ENCODE measurements at regions of chr14 and their contacts with region 1.

Region 1: DNA sequence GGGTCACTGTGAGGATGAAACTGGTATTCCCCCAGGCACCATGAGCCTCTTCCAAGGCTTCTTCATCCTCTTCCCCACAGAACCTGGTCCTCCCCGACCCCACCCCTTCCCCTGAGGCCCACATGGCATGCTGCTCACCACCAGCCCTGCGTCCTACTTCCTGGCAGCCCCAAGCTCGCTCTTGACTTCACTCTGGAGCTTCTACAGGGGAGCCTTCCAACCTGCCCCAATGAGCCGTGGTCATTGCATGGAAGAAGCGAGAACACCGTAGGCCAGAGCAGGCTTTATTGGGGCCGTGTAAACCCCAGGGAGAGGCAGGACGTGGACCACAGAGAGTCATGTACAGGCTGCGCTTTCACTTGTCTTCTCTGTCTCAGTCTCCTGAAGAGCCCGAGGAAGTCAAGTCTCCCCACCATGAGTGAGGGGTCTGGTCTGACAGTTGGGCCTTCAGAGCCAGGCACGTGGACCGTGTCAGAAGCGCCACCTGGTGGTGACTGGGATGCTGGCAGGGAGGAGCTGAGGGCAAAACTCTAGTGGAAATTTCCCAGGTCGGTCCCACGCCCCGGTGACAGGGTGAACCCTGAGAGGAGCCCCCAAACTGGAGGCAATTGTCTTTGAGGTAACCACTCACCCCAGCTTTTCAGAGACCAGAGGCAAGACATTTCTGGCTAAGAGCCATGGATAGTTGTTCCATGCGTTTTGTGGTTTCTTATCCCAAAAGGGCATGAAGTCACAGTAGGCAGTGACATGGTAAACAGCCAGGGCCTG is 17.5 kb downstream of the RPS6KL1 start:
- DNase-seq: no peak
- H3K4me3 ChIP-seq: no peak overlapping the region
- H3K27me3 ChIP-seq: no peaks in the 10 kb centered on the region
- CTCF ChIP-seq: peak; percentile 93

Region 2: DNA sequence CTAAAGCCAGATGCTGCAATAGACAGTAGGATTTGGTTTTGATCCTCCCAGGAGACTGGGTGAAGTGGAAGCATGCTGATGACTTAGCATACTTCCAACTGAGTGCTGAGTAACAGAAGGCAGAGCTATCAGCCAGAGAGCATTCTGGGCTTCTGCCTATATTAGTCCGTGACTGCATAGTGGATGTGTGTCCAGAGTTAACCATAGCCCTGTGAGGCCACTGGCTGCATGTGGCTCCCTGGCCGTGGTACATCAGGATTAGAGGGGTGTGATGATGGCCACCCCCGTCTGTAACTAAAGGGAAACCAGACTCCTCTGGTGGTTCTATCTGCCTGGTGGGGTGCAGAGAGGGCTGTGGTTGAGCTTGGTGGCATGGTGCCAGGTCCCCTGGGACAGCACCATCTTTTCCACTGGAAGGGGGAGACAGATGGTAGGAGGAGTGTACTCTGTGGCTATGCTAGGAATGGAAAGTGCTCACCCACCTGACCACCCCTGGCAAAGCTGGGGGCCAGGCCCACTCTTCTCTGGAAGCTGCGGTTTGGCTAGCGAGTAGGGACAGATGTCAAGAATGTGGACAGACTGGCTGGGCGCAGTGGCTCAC is 630.2 kb before region 1 on chr14:
- CTCF ChIA-PET with region 1: no interaction called
- POLR2A ChIA-PET with region 1: no interaction called
- DNase-seq: no peak
- H3K4me3 ChIP-seq: no peak overlapping the region
- H3K27me3 ChIP-seq: no peaks in the 10 kb centered on the region
- CTCF ChIP-seq: no peak

Region 3: GRCh38 chr14:74524076-74524811 is 381.3 kb before region 1 on chr14:
- CTCF ChIA-PET with region 1: no interaction called
- POLR2A ChIA-PET with region 1: no interaction called
- DNase-seq: no peak
- H3K4me3 ChIP-seq: no peak overlapping the region
- H3K27me3 ChIP-seq: no peaks in the 10 kb centered on the region
- CTCF ChIP-seq: no peak

Region 4: DNA sequence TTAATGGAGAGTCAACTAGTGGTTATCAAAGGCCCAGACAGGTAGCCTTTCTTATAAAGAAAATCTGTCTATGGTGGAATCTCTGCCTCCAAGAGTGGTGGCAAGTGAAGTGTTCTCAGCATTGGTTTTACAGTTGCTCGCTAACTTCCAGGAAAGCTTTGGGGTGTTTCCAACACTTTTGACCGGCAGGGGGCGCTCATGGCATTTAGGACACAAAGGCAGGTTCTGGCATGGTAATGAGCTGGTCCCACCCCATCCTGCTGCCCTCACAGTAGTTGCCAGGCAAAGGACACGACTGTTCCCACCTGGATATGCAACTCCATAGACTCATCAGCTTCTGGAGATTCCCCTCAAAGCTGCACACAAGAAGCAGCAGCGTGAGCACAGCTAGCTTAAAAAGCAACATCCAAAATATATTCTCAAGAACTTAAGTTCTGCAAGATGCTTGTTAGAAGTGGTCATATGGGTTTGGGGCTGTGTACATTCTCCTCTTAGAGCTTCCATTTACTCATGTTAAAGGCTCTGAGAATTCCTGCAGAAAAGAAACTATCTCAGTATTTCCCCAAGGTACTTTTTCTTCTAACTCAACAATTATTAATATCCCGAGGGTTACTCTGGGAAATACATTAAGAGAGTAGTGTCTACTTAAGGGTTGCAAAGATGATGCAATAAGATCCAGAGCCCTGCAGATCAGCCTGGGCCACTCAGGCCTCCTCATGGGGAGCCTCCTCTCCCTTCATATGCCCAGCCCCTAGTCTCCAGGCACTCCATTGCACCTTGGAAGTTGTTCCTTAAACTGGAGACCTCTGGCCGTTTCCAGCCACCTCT is 44.4 kb before region 1 on chr14:
- CTCF ChIA-PET with region 1: interaction called, 315 read pairs
- POLR2A ChIA-PET with region 1: no interaction called
- DNase-seq: no peak
- H3K4me3 ChIP-seq: no peak overlapping the region
- H3K27me3 ChIP-seq: no peaks in the 10 kb centered on the region
- CTCF ChIP-seq: peak; percentile 85

Region 5: DNA sequence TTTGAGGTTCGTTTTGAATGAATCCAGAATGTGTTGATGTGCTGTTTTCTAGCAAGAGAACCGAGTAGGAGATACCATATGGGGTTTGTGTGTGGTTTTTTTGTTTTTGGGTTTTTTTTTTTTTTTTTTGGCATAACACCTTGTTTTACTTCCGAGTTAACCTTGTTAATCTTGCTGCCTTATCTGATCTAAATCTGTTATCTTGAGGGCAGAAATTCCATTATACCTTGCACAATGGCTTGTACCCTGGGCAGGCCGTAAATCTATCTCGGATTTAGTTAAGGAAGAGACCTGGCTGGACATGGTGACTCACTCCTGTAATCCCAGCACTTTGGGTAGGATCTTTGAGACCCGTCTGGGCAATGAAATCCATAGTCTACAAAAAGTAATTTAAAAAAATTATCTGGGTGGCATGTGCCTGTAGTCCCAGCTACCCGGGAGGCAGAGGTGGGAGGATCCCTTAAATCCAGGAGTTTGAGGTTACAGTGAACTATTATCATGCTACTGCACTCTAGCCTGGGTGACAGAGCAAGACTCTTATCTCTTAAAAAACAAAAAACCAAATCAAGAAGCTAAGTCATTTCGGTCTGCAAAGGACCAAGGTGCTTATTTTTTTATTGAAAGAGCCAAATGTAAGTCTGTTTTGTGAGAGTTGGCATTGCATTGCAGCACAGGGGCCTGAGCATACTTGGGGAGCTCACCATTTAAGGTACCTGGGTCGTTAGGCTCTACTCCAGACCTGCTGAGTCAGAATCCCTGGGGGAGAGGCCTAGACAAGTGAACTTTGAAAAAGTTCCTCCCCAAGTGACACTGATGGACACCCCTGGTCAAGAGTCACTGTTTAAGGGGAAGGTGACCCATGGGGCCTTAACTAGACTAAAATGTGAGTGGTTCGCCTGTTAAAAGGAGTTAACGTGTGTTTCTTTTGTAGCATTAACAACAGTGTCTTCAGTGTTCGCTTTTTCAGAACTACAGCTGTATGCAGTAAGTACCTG is 17.1 kb before region 1 on chr14:
- CTCF ChIA-PET with region 1: interaction called, 195 read pairs
- POLR2A ChIA-PET with region 1: no interaction called
- DNase-seq: no peak
- H3K4me3 ChIP-seq: no peak overlapping the region
- H3K27me3 ChIP-seq: no peaks in the 10 kb centered on the region
- CTCF ChIP-seq: no peak

Region 6: GRCh38 chr14:74922739-74923401 is 17.3 kb after region 1 on chr14 and contains the start of gene RPS6KL1:
- CTCF ChIA-PET with region 1: interaction called, 11 read pairs
- POLR2A ChIA-PET with region 1: no interaction called
- DNase-seq: no peak
- H3K4me3 ChIP-seq: peak within 1 kb of the TSS; percentile 48
- H3K27me3 ChIP-seq: peaks cover 2% of the 10 kb centered on the region
- CTCF ChIP-seq: no peak
- polyA plus RNA-seq, gene RPS6KL1: 1.4 and 2.8 TPM in 2 replicates